Heart right ventricle (tissue), 16 donors: ENCODE measurements at regions of chr1 and their contacts with region 1.

Region 1: DNA sequence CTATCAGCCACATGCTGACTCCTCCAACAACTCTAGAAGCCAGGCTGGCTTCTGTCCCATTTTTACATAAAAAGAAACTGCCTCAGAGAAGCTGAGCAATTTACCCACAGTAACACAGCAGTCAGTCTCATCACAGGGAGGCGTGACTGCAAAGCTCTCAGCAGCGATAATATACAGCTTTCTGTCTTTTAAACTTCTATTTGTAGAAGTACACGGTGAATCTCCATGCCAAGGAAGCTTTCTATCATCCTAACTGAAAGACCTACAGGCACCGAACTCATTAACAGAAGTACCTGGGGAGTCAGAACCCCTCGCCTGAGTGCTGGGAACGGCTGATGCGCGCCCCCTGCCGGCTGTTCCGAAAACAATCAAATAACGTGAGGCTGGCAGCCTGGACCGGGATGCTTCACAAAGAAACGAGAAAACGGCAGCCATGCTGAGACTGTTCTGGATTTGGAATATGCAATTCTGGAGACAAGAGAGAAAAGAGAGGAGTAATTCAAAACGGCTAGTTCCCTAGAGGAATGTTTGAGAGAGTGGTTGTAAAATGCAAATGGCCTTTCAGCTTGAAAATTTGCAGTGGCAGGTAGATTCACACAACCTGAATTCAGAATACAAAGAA is 43.5 kb upstream of the RAB4A start:
- DNase-seq: peak; percentile 73 to 85
- ATAC-seq: peak; percentile 29 to 59 (median 42)
- H3K4me3 ChIP-seq: no peak overlapping the region
- H3K27ac ChIP-seq: peak overlapping the region in 1 of 10 donors; percentile 37
- H3K4me1 ChIP-seq: peaks cover 6 to 44% (median 26%) of the 10 kb centered on the region in 9 donors
- H3K27me3 ChIP-seq: no peaks in the 10 kb centered on the region
- CTCF ChIP-seq: peak; percentile 75 to 90 (median 87)

Region 2: DNA sequence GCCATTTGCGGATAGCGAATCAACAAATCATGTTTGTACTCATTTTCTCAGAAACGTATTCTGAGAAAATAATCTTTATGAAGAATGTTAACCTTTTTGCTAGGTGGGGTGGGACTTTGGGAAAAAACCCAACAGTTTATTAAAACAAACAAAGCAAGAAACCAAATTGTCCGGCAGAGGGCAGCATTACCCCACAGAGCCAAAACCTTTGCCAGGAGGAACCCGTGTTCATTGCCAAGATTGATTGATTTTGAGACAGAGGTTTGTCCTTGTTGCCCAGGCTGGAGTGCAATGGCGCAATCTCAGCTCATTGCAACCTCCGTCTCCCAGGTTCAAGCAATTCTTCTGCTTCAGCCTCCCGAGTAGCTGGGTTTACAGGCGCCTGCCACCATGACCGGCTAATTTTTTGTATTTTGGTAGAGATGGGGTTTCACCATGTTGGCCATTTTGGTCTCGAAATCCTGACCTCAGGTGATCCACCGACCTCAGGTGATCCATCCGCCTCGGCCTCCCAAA is 563.0 kb before region 1 on chr1:
- intact Hi-C with region 1: loop called in 6 of 10 experiments (anchors 1 to 5 kb)
- DNase-seq: peak; percentile 62 to 75
- ATAC-seq: peak in 4 of 8 donors; percentile 33 to 55 (median 47)
- H3K4me3 ChIP-seq: no peak overlapping the region
- H3K27ac ChIP-seq: no peak overlapping the region
- H3K4me1 ChIP-seq: peaks cover 0 to 13% (median 3%) of the 10 kb centered on the region in 9 donors
- H3K27me3 ChIP-seq: peaks cover 0 to 10% (median 0%) of the 10 kb centered on the region in 7 donors
- CTCF ChIP-seq: peak; percentile 70 to 94 (median 84)

Region 3: GRCh38 chr1:228691926-228692325 is 535.5 kb before region 1 on chr1:
- intact Hi-C with region 1: loop called in 7 of 10 experiments (anchors 5 to 10 kb)
- DNase-seq: no peak
- ATAC-seq: no peak
- H3K4me3 ChIP-seq: no peak overlapping the region
- H3K27ac ChIP-seq: no peak overlapping the region
- H3K4me1 ChIP-seq: peaks cover 0 to 1% (median 0%) of the 10 kb centered on the region in 9 donors
- H3K27me3 ChIP-seq: peaks cover 0 to 6% (median 0%) of the 10 kb centered on the region in 7 donors
- CTCF ChIP-seq: peak; percentile 15 to 58 (median 48)

Region 4: GRCh38 chr1:228902781-228903433 is 324.5 kb before region 1 on chr1:
- intact Hi-C with region 1: loop called in 1 of 10 experiments (anchors 5 kb)
- DNase-seq: peak; percentile 63 to 78
- ATAC-seq: peak; percentile 75 to 90 (median 85)
- H3K4me3 ChIP-seq: no peak overlapping the region
- H3K27ac ChIP-seq: peak overlapping the region in 2 of 10 donors; percentile 5 to 44
- H3K4me1 ChIP-seq: peaks cover 0 to 21% (median 13%) of the 10 kb centered on the region in 9 donors
- H3K27me3 ChIP-seq: peaks cover 0 to 11% (median 0%) of the 10 kb centered on the region in 7 donors
- CTCF ChIP-seq: no peak